K562 (cell line): ENCODE measurements at regions of chr17 and their contacts with region 1.

Region 1: GRCh38 chr17:75658237-75658636 is 8.7 kb downstream of the RECQL5 start:
- DNase-seq: no peak
- ATAC-seq: no peak
- H3K4me3 ChIP-seq: no peak overlapping the region
- H3K27ac ChIP-seq: no peak overlapping the region
- H3K4me1 ChIP-seq: no peaks in the 10 kb centered on the region
- H3K27me3 ChIP-seq: no peaks in the 10 kb centered on the region
- CTCF ChIP-seq: no peak
- EP300 ChIP-seq: no peak
- POLR2A ChIP-seq: no peak
- RAD21 ChIP-seq: no peak

Region 2: DNA sequence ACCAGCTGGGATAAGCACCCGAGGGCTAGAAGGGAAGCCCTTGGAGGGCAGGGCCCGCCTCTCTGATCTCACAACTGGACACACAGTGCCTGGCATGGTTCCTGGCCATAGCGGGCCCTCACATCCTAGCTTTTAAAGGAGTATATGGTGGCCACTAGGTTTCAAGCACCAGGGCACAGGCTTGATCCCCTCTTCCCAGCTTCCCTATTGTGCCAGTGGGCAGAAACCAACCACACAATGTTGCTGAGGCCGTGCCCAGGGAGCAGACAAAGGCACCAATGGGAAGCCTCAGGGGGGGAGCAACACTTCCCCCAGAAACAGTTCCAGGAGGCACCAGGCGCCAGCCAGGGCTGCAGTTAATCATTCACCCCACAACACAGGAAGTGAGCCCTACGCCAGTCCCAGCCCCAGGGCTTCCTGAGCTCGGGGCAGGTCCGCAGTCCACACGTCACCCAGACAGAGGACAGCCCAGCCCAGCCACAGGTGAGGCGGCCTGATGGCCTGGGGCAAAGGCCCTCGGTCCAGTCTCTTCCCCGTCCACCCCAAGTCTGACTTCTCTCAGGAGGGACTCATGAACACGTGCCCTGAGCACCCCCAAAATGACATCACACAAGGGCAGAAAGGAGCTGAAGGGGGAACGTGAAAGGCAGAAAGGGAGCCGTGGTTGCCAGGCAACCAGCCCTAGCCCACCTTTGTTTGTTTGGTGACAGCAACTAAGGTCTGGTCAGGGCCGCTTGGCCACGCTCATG is 12.2 kb before region 1 on chr17:
- CTCF ChIA-PET with region 1: no interaction called
- POLR2A ChIA-PET with region 1: interaction called, 15 read pairs
- in situ Hi-C with region 1: no loop called
- intact Hi-C with region 1: no loop called
- DNase-seq: no peak
- ATAC-seq: no peak
- H3K4me3 ChIP-seq: no peak overlapping the region
- H3K27ac ChIP-seq: no peak overlapping the region
- H3K4me1 ChIP-seq: peaks cover 15 to 21% of the 10 kb centered on the region in 2 experiments; a peak in 4 of 5 replicates
- H3K27me3 ChIP-seq: no peaks in the 10 kb centered on the region
- CTCF ChIP-seq: no peak
- EP300 ChIP-seq: no peak
- POLR2A ChIP-seq: no peak
- RAD21 ChIP-seq: no peak